ENCODE measurements at regions of chr11 and their contacts with region 1.

Region 1: DNA sequence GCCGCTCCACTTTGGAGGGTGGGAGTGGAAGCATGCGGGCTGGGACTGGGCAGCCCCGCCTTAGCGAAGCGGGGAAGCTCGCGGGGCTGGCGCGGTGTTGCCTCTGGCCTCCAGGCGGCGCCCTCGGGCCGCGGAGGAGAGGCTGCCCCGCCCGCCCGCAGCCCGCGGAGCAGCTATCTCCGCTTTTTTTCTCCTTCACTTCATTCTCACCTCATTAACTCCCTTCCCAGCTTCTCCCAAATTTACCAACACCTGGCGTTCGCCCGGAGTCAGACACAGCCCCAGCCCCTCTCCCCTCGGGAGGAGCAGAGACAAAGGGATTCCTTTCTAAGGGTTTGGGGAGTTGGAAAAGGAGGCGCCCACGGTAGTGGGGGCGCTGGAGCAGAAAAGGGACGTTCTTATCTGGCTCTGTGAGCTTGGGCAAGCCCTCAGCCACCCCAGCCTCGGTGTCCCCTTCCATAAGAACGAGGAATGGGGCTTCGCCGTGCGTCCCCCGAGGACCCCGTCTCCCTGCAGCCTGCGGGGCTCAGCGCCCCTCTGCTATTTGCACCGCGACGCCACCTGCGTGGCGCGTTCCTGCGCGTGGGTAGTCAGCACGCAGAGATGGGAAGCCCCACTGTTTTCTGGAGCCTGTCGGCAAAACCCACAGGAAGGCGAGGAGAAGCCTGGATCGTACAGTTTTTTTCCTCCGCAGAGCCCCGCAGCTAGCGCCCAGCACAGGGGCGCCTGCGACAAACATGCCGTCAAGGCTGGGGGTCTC is 1.5 kb upstream of the WNT11 start:
- DNase-seq: peak; percentile 91
- CTCF ChIP-seq: peak; percentile 93

Region 2: DNA sequence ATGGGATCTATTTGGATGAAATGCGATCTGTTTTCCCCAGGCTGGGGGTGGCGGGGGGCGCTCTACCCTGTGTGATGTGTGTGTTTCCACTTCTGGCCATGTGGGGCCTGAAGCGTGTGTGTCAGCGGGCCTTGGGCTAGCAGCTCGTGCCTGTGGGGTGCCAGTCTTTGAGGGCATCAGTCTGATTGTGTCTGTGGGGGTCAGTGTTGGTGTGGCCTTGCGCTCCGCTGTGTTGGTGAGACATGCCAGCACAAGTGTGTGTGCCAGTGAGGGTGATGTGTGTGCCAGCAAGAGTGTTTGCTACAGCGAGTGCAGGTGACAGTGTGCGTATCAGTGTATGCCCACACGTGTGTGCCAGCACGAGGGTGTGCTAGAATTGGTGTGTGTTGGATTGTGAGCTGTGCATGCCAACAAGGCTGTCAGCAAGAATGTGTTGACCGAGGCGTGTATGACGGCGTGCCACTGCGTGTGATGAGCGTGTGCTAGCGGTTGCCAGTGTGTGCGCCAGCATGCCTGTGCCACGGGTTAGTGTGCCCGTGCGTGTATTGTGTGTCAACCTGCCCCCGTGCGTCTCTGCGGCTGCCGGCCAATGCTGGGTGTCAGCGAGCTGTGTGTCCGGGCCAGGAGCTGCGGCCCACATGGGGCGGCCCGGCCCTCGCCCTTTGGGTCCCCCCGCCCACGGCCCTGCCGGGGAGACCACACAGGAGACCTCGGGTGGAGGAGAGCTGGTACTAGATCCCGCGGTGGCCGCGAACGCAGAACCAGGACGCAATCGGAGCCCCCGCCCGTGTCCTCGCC is 856.9 kb before region 1 on chr11:
- CTCF ChIA-PET with region 1: no interaction called
- POLR2A ChIA-PET with region 1: no interaction called
- DNase-seq: peak; percentile 40
- CTCF ChIP-seq: no peak

Region 3: GRCh38 chr11:76185931-76186401 is 21.9 kb before region 1 on chr11:
- CTCF ChIA-PET with region 1: interaction called, 14 read pairs
- POLR2A ChIA-PET with region 1: no interaction called
- DNase-seq: no peak
- CTCF ChIP-seq: no peak

Region 4: DNA sequence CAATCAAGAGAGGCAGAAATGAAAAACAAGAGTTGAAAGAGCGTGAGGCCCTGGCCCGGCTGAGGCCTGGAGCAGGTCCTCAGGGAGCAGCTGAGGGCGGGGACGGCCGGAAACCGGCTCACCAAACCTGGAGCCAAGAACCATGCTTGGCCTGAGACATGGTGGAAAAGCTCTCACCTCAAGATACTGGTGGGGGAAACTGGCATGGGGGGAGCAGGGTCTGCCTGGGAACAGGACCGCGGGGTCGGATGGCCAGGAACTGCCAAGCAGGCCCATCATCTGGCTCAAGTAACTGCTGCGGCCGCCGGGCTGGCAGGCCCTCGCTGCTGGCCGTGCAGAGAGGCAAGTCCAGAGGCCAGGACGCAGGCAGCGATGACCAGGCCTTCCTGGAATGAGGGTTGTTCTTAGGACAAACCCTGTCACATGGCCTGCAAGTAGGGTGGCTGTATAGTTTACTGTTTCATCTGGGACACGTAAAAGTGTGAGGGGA is 17.3 kb after region 1 on chr11:
- CTCF ChIA-PET with region 1: interaction called, 63 read pairs
- POLR2A ChIA-PET with region 1: no interaction called
- DNase-seq: no peak
- CTCF ChIP-seq: no peak

Region 5: GRCh38 chr11:76243193-76243956 is 35.6 kb after region 1 on chr11:
- CTCF ChIA-PET with region 1: interaction called, 64 read pairs
- POLR2A ChIA-PET with region 1: interaction called, 4 read pairs
- DNase-seq: no peak
- CTCF ChIP-seq: no peak

Region 6: DNA sequence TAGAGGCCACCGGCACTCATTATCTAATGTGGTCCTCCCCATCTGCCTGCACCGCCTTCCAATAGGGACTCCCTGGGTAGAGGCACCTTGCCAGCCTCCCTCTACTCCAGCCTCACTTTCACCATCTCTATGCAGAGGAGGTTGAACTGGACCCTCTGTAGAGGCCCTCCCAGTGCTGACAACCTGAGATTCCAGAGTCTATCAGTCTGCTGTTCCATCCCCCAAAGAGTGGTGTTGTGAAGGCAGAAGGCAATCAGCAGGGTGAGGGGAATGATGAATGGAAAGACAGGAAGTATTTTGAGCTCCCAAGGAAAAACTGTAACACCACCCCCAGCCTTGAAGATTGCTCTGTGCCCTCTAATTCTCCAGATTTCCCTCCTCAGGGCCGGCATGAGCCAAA is 95.2 kb after region 1 on chr11:
- CTCF ChIA-PET with region 1: interaction called, 17 read pairs
- POLR2A ChIA-PET with region 1: no interaction called
- DNase-seq: no peak
- CTCF ChIP-seq: no peak

Region 7: DNA sequence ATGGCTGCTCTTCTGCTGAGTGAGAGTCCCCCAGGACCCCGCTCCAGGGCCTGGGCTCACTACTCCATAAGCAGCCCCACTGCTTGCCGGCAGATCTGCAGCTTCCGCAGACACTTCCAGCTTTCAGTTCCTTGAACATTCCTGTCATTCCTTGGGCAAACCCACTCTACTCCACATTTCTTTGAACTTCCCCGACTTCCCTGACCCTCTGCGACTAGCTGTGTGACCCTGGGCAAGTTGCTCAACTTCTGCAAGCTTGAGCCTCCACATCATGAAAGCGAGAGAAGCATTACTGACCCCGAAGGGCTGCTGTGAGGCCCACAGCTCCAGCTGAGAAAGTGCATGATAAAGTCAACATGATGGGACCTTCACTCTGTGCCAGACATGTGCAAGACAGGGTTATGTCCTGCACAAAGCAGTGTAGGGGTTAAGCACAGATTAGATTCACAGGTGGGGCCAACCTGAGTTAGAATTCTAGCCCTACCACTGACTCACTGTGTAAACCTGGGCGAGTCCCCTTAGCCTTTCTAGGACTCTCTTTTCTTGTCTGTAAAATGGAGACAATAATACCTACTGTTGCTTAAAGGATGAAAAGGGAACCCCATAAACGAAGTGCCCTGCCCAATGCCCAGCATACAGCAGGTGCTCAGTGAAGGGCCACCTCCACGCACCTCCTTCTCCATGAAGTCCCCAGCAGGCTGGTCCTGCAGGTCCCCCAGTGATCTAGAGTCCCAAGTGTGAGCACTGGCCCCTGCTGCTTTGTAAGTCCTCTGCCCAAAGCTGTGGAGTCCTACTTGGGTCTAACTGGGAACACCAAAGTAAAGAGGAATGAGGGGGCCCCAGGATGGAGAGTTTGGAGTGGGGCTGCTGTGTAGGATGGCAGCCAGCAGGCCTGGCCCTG is 121.5 kb after region 1 on chr11:
- CTCF ChIA-PET with region 1: interaction called, 296 read pairs
- POLR2A ChIA-PET with region 1: no interaction called
- DNase-seq: no peak
- CTCF ChIP-seq: no peak

Region 8: DNA sequence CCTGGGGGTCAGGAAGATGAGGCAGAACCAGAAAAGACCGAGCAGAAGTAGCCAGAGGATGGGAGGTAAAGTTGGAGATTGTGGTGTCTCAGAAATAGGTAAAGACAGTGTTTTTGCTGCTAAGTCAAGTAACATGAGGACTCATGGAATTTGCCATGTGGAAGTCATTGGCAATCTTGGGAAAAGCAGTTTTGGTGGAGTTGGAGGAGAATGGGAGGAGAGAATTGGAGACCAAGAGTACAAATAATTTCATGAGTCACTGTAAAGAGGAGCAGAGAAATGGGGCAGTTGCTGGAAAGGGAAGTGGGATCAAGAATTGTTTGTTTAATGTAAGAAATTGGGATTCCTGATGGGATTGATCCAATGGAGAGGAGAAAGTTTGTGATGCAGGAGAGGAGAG is 351.1 kb after region 1 on chr11:
- CTCF ChIA-PET with region 1: no interaction called
- POLR2A ChIA-PET with region 1: no interaction called
- DNase-seq: no peak
- CTCF ChIP-seq: no peak